Left ventricle myocardium inferior (tissue), 1 donor: ENCODE measurements at regions of chr20 and their contacts with region 1.

Region 1: GRCh38 chr20:25629816-25630499 is 6.1 kb upstream of the NANP start:
- DNase-seq: no peak
- H3K4me3 ChIP-seq: no peak overlapping the region
- H3K27ac ChIP-seq: no peak overlapping the region
- H3K4me1 ChIP-seq: peaks cover under 1% of the 10 kb centered on the region
- H3K27me3 ChIP-seq: no peaks in the 10 kb centered on the region
- CTCF ChIP-seq: no peak

Region 2: GRCh38 chr20:25696384-25697131 is 66.6 kb after region 1 on chr20 and contains the start of gene ZNF337:
- intact Hi-C with region 1: loop called (anchors 5 kb)
- DNase-seq: peak; percentile 96
- H3K4me3 ChIP-seq: peak within 1 kb of the TSS; percentile 89
- H3K27ac ChIP-seq: peak within 1 kb of the TSS; percentile 95
- H3K4me1 ChIP-seq: peaks cover 31% of the 10 kb centered on the region
- H3K27me3 ChIP-seq: no peaks in the 10 kb centered on the region
- CTCF ChIP-seq: no peak
- total RNA-seq, gene ZNF337: 6.3 TPM